HEK293 (cell line): ENCODE measurements at regions of chr2 and their contacts with region 1.

Region 1: DNA sequence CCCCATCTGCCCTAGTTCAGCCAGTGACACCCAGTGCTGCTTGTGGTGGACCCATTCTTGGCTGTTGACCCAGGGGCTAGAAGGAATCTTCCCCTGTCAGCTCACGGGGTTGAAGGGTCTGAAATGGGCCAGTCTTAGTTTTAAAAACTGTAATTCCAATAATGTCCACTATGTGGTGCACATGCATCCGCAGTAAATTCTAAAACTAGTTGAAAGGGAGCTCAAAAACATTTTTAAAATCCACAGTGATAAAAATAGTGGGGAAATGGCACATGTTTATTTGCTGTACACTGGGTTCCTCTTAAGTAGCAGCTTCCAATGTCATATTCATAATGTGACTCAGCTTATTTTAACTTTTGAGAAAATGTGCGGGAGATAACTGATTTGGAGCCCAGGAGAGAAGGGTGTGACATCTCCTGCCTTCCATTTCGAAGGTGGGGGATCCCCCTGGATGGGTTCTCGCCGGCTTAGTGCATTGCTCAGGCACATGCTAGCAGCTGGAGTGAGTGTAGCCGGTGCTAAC is 32.8 kb downstream of the GRHL1 start:
- H3K4me3 ChIP-seq: no peak overlapping the region
- H3K27ac ChIP-seq: no peak overlapping the region
- H3K4me1 ChIP-seq: peaks cover 3% of the 10 kb centered on the region; the same call in 1 of the 2 replicates
- CTCF ChIP-seq: peak; percentile 16; the same call in 1 of the 2 replicates

Region 2: DNA sequence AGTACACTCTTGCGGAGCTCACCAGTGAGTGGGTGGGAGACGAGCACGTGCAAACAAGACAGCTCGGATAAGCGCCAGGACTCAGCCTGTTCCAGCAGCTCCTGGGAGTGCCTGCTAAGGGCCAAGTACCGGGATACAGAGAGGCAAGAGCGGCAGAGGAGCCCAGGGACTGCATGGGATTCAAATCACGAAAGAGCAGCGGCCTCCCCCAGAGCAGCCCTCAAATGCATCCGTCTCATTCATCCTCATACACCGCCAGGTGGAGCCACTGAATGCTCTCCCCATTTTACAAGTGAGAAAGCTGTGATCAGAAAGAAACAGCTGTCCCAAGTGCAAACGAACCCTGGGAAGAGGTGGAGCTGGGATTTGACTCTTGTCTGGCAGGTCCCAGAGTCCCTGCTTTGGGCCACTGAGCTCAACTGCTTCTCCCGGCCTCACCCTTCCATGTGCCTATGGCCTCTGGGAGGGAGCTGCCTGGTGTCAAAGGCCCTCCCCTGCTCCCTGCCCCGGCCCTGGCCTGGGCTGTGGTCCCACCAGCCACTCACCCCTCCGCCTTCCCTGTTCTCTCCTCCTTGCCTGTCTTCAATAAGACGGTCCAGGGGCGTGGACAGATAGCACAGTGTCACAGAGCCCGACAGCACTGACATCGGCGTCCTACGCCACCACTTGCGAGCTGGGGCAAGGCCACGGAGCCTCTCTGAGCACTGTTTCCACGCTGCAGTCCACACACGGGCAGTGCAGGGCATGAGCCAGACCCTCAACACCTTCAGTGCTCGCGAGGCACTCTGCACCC is 213.8 kb before region 1 on chr2:
- CTCF ChIA-PET with region 1: interaction called, 11 read pairs
- POLR2A ChIA-PET with region 1: no interaction called
- H3K4me3 ChIP-seq: no peak overlapping the region
- H3K27ac ChIP-seq: no peak overlapping the region
- H3K4me1 ChIP-seq: no peaks in the 10 kb centered on the region
- CTCF ChIP-seq: 0 out of 2 replicates have a peak, but pooled peaks have one; percentile 39

Region 3: DNA sequence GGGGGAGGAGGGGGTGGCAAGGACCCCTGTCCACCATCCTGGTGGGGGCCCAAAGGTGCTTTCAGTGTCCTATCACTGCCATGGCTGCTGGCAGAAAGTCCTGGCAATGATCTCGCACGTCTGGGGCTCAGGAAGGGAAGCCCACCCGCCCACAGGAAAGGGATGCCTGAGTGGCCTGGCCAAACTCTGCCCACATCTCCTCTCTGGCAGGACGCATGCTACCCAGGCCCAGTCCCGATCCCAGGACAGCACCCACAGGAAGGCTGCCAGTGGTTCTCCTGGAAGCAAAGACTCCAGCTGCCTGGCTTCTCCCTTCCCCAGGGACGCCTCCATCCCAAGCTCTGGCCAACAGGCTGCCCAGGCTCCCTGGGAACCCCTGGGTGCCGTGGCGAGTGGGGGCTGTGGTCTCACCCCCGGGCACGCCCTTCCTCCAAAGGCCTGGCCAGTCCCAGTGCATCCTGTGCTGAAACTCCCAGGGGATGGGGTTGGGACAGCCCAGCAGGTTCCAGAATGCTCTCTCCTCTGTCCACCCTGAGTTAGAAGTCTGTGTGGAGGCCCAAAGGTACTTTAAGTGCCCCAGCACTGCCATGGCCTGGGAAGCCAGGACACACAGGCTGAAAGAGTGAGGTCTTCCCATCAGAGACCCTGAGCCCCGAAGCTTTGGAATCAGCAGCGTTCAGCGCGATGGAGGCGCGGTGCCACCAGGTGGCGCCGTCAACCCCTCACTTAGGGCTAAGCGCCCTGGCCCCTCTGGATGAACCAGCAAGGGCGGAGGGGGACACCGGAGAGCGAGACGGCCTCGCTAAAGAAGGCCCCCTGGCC is 170.8 kb before region 1 on chr2:
- CTCF ChIA-PET with region 1: interaction called, 15 read pairs
- POLR2A ChIA-PET with region 1: no interaction called
- H3K4me3 ChIP-seq: no peak overlapping the region
- H3K27ac ChIP-seq: no peak overlapping the region
- H3K4me1 ChIP-seq: no peaks in the 10 kb centered on the region
- CTCF ChIP-seq: peak; percentile 86

Region 4: GRCh38 chr2:9972621-9973479 is 11.4 kb before region 1 on chr2:
- CTCF ChIA-PET with region 1: interaction called, 15 read pairs
- POLR2A ChIA-PET with region 1: interaction called, 4 read pairs
- H3K4me3 ChIP-seq: no peak overlapping the region
- H3K27ac ChIP-seq: no peak overlapping the region
- H3K4me1 ChIP-seq: peaks cover 17% of the 10 kb centered on the region
- CTCF ChIP-seq: no peak

Region 5: DNA sequence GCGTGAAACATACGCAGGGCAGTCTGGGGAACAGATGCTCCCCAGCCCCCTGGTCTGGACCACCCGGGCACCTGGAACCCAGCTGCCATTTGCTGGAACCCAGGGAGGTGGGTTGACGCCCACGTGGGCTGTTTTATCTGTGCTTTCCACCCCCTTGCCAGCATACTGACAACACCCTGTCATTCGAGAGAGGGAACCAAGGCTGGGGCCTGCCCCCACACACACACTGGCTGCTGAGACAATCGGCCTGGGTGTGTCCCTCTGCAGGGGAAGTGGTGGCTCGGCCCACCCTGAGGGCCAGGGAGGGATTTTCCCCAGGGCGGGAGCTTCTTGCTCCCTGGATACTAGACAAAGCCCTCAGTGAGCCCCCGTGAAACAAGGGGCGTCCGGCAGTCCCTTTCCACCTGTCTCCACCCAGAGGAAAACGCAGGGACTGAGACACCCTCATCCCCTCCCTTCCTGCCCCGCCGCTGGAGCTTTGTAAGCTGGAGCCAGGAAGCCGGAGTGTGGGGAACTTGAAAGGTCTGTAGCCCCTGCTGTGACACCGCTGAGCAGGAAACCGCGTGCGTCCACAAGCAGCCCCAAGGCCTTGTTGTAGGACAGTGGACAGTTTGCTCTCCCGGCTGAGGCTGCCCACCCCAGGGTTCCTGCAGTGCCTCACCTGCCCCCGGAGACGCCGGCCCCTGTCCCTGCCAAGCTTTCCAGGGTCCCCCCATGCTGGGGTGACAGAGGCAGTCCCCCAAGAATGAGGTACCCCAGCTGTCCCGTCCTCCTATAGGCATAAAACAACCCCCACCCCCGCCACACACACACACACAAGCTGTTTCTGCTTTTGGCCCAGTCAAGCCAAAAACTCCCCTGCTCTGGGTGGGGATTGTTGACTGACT is 45.0 kb after region 1 on chr2:
- CTCF ChIA-PET with region 1: interaction called, 10 read pairs
- POLR2A ChIA-PET with region 1: no interaction called
- H3K4me3 ChIP-seq: no peak overlapping the region
- H3K27ac ChIP-seq: no peak overlapping the region
- H3K4me1 ChIP-seq: no peaks in the 10 kb centered on the region
- CTCF ChIP-seq: no peak